Heart right ventricle (tissue), 16 donors: ENCODE measurements at regions of chr20 and their contacts with region 1.

Region 1: GRCh38 chr20:38073307-38074071 is 39.9 kb downstream of the RPRD1B start:
- DNase-seq: peak; percentile 30 to 85
- ATAC-seq: peak; percentile 72 to 88 (median 82)
- H3K4me3 ChIP-seq: peak overlapping the region in 1 of 10 donors; percentile 3
- H3K27ac ChIP-seq: peak overlapping the region; percentile 57 to 91 (median 82)
- H3K4me1 ChIP-seq: peaks cover 8 to 61% (median 41%) of the 10 kb centered on the region in 9 donors
- H3K27me3 ChIP-seq: no peaks in the 10 kb centered on the region
- CTCF ChIP-seq: peak; percentile 72 to 91 (median 79)

Region 2: DNA sequence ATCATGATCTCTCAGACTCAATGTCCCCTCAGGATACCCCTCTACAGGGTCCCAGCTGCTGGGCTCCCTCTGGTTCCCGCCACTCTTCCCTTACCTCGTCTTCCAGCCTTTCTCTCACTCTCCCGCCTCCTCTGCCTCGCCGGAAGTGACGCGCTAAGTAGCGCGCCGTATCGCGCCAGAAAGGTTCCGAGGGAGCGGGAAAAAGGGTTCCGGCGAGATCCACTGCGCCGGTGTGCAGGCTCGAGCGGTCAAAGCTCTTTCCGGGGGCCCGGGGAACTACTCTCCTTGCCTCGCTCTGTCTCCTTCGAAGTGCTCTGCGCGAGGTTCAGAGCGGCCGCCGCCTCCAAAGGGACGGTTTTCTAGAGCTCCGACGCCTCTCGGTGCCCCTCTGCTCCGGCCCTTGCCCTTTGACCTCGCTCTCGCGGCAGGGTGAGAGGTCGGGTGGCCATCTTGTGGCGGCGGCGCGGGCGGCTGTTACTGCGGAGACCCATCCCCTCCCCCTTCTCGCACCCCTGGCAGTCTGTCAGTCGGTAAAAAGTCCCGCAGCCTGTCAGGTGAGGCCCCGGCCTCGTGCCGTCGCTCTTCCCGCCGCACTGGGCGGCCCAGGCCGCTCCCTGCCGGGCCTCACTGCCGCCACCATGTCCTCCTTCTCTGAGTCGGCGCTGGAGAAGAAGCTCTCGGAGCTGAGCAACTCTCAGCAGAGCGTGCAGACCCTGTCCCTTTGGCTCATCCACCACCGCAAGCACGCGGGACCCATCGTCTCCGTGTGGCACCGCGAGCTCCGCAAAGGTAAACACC is 40.0 kb before region 1 on chr20 and contains the starts of genes RPRD1B and TTI1:
- intact Hi-C with region 1: no loop called
- DNase-seq: peak; percentile 90 to 93
- ATAC-seq: peak; percentile 96 to 99 (median 98)
- H3K4me3 ChIP-seq: peak within 1 kb of the TSS; percentile 71 to 99 (median 95)
- H3K27ac ChIP-seq: peak within 1 kb of the TSS; percentile 90 to 98 (median 97)
- H3K4me1 ChIP-seq: peaks cover 4 to 65% (median 54%) of the 10 kb centered on the region in 9 donors
- H3K27me3 ChIP-seq: no peaks in the 10 kb centered on the region
- CTCF ChIP-seq: peak in 2 of 9 donors; percentile 3 to 6
- total RNA-seq, gene RPRD1B: 40.6 to 78.1 (median 48.8) TPM
- total RNA-seq, gene TTI1: 9.1 to 14.8 (median 11.3) TPM

Region 3: GRCh38 chr20:38159957-38160756 is 86.7 kb after region 1 on chr20:
- intact Hi-C with region 1: loop called in 7 of 10 experiments (anchors 1 to 5 kb)
- DNase-seq: no peak
- ATAC-seq: no peak
- H3K4me3 ChIP-seq: peak overlapping the region in 1 of 10 donors; percentile 6
- H3K27ac ChIP-seq: peak overlapping the region; percentile 82 to 96 (median 92)
- H3K4me1 ChIP-seq: peaks cover 50 to 99% (median 82%) of the 10 kb centered on the region in 9 donors
- H3K27me3 ChIP-seq: no peaks in the 10 kb centered on the region
- CTCF ChIP-seq: no peak

Region 4: GRCh38 chr20:38246357-38247165 is 173.1 kb after region 1 on chr20:
- intact Hi-C with region 1: no loop called
- DNase-seq: peak; percentile 32 to 34
- ATAC-seq: peak; percentile 27 to 71 (median 56)
- H3K4me3 ChIP-seq: no peak overlapping the region
- H3K27ac ChIP-seq: peak overlapping the region in 3 of 10 donors; percentile 20 to 26 (median 25)
- H3K4me1 ChIP-seq: peaks cover 0 to 27% (median 12%) of the 10 kb centered on the region in 9 donors
- H3K27me3 ChIP-seq: no peaks in the 10 kb centered on the region
- CTCF ChIP-seq: no peak

Region 5: GRCh38 chr20:38633577-38634093 is 560.1 kb after region 1 on chr20:
- intact Hi-C with region 1: no loop called
- DNase-seq: peak; percentile 23 to 27
- ATAC-seq: peak in 7 of 8 donors; percentile 38 to 79 (median 62)
- H3K4me3 ChIP-seq: no peak overlapping the region
- H3K27ac ChIP-seq: no peak overlapping the region
- H3K4me1 ChIP-seq: peaks cover 0 to 6% (median 0%) of the 10 kb centered on the region in 9 donors
- H3K27me3 ChIP-seq: peaks cover 0 to 29% (median 10%) of the 10 kb centered on the region in 7 donors
- CTCF ChIP-seq: peak; percentile 58 to 94 (median 82)